Activated CD4-positive, alpha-beta T cell treated with anti-CD3 and anti-CD28 coated beads for 36 hours (primary cell): ENCODE measurements at regions of chr19 and their contacts with region 1.

Region 1: GRCh38 chr19:51259348-51260245 is 8.7 kb downstream of the SIGLECL1 start:
- DNase-seq: peak; percentile 66
- ATAC-seq: no peak
- H3K4me3 Mint-ChIP-seq: no peak overlapping the region
- H3K27ac Mint-ChIP-seq: no peak overlapping the region
- H3K4me1 Mint-ChIP-seq: peaks cover 5% of the 10 kb centered on the region
- H3K27me3 Mint-ChIP-seq: peaks cover 26% of the 10 kb centered on the region

Region 2: GRCh38 chr19:51168564-51169282 is 90.9 kb before region 1 on chr19:
- CTCF ChIA-PET with region 1: interaction called, 3 read pairs
- POLR2A ChIA-PET with region 1: no interaction called
- intact Hi-C with region 1: loop called in 1 of 2 experiments (anchors 1 kb)
- DNase-seq: no peak
- ATAC-seq: no peak
- H3K4me3 Mint-ChIP-seq: no peak overlapping the region
- H3K27ac Mint-ChIP-seq: no peak overlapping the region
- H3K4me1 Mint-ChIP-seq: peaks cover 12% of the 10 kb centered on the region
- H3K27me3 Mint-ChIP-seq: peaks cover 3% of the 10 kb centered on the region

Region 3: DNA sequence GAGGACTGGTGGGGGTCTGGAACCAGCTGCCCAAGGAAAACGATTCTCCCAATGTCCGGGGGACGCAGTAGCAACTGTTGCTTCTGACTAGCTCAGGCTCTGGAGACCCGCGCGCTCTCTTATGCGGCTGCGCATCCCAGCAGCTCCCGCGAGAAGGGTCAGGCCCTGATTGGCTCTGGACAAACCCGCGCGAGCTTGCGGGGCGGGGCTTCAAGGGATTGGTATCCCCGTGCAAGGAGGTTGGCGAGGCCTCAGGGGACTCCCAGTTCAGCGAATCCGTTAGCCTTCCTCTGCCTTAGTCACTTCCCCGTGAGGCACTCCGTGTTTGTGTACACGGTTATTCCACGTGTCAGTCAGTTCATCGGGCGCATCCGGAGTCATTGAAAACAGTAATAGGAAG is 11.5 kb after region 1 on chr19:
- CTCF ChIA-PET with region 1: interaction called, 19 read pairs
- POLR2A ChIA-PET with region 1: no interaction called
- intact Hi-C with region 1: no loop called
- DNase-seq: no peak
- ATAC-seq: no peak
- H3K4me3 Mint-ChIP-seq: no peak overlapping the region
- H3K27ac Mint-ChIP-seq: no peak overlapping the region
- H3K4me1 Mint-ChIP-seq: peaks cover 11% of the 10 kb centered on the region
- H3K27me3 Mint-ChIP-seq: no peaks in the 10 kb centered on the region

Region 4: GRCh38 chr19:51354742-51355148 is 95.1 kb after region 1 on chr19:
- CTCF ChIA-PET with region 1: no interaction called
- POLR2A ChIA-PET with region 1: no interaction called
- intact Hi-C with region 1: no loop called
- DNase-seq: peak; percentile 48
- ATAC-seq: peak; percentile 84
- H3K4me3 Mint-ChIP-seq: peak overlapping the region; percentile 24
- H3K27ac Mint-ChIP-seq: peak overlapping the region; percentile 86
- H3K4me1 Mint-ChIP-seq: peaks cover 31% of the 10 kb centered on the region
- H3K27me3 Mint-ChIP-seq: no peaks in the 10 kb centered on the region